CD8-positive, alpha-beta T cell (primary cell): ENCODE measurements at regions of chr6 and their contacts with region 1.

Region 1: DNA sequence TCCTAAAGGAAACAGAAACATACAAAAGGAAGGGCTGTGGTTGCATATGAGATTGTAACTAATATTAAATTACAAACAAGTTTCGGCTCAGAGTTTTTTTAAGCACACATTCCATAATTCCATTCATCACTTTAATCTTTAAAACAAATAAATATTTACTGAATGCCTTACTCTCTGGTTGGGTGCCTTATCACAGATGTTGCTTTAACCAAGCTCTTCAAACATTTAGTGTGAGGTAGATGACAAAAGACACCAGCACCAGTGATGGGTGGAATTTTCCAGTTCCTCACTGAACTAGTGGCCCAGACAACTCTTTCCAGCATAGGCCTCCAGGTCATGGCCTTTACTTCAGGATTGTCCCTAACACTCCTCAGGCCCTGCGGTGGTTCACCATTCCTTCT is 58.7 kb downstream of the ARHGAP18 start:
- DNase-seq: no peak
- ATAC-seq: no peak
- H3K4me3 ChIP-seq: no peak overlapping the region
- H3K4me3 Mint-ChIP-seq: no peak overlapping the region
- H3K27ac ChIP-seq: no peak overlapping the region
- H3K27ac Mint-ChIP-seq: no peak overlapping the region
- H3K4me1 ChIP-seq: no peaks in the 10 kb centered on the region
- H3K4me1 Mint-ChIP-seq: peaks cover 4% of the 10 kb centered on the region
- H3K27me3 ChIP-seq: no peaks in the 10 kb centered on the region
- H3K27me3 Mint-ChIP-seq: no peaks in the 10 kb centered on the region
- CTCF ChIP-seq: no peak

Region 2: GRCh38 chr6:129031051-129031599 is 620.2 kb before region 1 on chr6:
- CTCF ChIA-PET with region 1: no interaction called
- POLR2A ChIA-PET with region 1: no interaction called
- intact Hi-C with region 1: no loop called
- DNase-seq: no peak
- ATAC-seq: no peak
- H3K4me3 ChIP-seq: no peak overlapping the region
- H3K4me3 Mint-ChIP-seq: no peak overlapping the region
- H3K27ac ChIP-seq: no peak overlapping the region
- H3K27ac Mint-ChIP-seq: no peak overlapping the region
- H3K4me1 ChIP-seq: no peaks in the 10 kb centered on the region
- H3K4me1 Mint-ChIP-seq: no peaks in the 10 kb centered on the region
- H3K27me3 ChIP-seq: peaks cover 0 to 2% of the 10 kb centered on the region in 2 experiments
- H3K27me3 Mint-ChIP-seq: no peaks in the 10 kb centered on the region
- CTCF ChIP-seq: no peak

Region 3: DNA sequence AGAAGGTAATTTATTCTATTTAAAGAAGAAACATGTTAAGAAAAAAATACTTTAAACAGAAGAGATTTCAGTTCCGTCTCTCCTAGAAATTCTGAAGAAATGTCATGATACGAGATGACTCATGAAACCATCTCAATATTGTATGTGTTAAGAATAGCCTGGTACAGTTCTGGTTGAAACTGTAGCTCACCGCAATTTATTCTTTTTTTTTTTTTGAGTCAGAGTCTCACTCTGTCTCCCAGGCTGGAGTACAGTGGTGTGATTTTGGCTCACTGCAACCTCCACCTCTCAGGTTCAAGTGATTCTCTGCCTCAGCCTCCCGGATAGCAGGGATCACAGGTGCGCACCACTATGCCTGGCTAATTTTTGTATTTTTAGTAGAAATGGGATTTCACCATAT is 44.6 kb before region 1 on chr6:
- CTCF ChIA-PET with region 1: no interaction called
- POLR2A ChIA-PET with region 1: no interaction called
- intact Hi-C with region 1: loop called in 1 of 2 experiments (anchors 5 kb)
- DNase-seq: no peak
- ATAC-seq: no peak
- H3K4me3 ChIP-seq: no peak overlapping the region
- H3K4me3 Mint-ChIP-seq: no peak overlapping the region
- H3K27ac ChIP-seq: no peak overlapping the region
- H3K27ac Mint-ChIP-seq: no peak overlapping the region
- H3K4me1 ChIP-seq: no peaks in the 10 kb centered on the region
- H3K4me1 Mint-ChIP-seq: no peaks in the 10 kb centered on the region
- H3K27me3 ChIP-seq: no peaks in the 10 kb centered on the region
- H3K27me3 Mint-ChIP-seq: no peaks in the 10 kb centered on the region
- CTCF ChIP-seq: no peak